ENCODE measurements at regions of chr2 and their contacts with region 1.

Region 1: GRCh38 chr2:157269922-157270321 is 12.4 kb downstream of the GALNT5 start:
- DNase-seq: no peak
- H3K4me3 ChIP-seq: no peak overlapping the region
- H3K27ac ChIP-seq: no peak overlapping the region
- H3K4me1 ChIP-seq: no peaks in the 10 kb centered on the region
- H3K27me3 ChIP-seq: no peaks in the 10 kb centered on the region
- CTCF ChIP-seq: no peak

Region 2: GRCh38 chr2:155895016-155895415 is 1374.9 kb before region 1 on chr2:
- CTCF ChIA-PET with region 1: interaction called, 15 read pairs
- dilution Hi-C with region 1: no loop called
- in situ Hi-C with region 1: no loop called
- intact Hi-C with region 1: no loop called
- DNase-seq: peak; percentile 37
- H3K4me3 ChIP-seq: no peak overlapping the region
- H3K27ac ChIP-seq: no peak overlapping the region
- H3K4me1 ChIP-seq: no peaks in the 10 kb centered on the region
- H3K27me3 ChIP-seq: no peaks in the 10 kb centered on the region
- CTCF ChIP-seq: no peak